ENCODE measurements at regions of chr11 and their contacts with region 1.

Region 1: GRCh38 chr11:108654994-108655631 is 9.8 kb upstream of the DDX10 start:
- DNase-seq: no peak
- ATAC-seq: peak; percentile 49 to 61

Region 2: DNA sequence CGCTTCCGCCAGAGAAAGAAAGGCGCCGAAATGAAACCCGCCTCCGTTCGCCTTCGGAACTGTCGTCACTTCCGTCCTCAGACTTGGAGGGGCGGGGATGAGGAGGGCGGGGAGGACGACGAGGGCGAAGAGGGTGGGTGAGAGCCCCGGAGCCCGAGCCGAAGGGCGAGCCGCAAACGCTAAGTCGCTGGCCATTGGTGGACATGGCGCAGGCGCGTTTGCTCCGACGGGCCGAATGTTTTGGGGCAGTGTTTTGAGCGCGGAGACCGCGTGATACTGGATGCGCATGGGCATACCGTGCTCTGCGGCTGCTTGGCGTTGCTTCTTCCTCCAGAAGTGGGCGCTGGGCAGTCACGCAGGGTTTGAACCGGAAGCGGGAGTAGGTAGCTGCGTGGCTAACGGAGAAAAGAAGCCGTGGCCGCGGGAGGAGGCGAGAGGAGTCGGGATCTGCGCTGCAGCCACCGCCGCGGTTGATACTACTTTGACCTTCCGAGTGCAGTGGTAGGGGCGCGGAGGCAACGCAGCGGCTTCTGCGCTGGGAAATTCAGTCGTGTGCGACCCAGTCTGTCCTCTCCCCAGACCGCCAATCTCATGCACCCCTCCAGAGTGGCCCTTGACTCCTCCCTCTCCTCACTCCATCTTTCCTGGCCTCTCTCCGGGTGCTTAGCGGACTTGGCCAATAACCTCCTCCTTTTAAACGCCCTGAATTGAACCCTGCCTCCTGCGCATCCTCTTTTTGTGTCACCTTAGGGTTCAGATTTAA is 432.2 kb before region 1 on chr11 and contains the start of gene ATM:
- intact Hi-C with region 1: loop called in 1 of 2 experiments (anchors 10 kb)
- DNase-seq: peak; percentile 100
- ATAC-seq: peak; percentile 97 to 98
- total RNA-seq, gene ATM: 40.8 to 43.0 TPM

Region 3: DNA sequence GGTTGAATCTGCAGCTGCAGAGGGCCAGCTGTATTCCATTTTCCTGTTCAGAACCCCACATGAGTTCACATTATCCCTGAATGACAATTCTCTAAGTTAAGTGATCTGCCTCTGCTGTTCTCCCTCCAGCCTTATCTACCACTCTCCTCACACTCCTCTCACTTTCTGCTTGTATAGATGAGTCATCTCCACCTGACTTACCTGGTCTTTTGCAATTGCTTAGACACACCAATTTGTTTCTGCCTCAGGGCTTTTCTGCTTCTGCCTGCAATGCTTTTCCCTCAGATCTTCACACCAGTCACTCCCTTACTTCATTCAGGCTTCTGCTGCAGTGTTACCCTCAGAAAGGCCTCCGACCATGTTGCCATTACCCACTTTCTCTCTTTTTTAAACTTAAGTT is 314.1 kb before region 1 on chr11:
- intact Hi-C with region 1: loop called in 1 of 2 experiments (anchors 10 kb)
- DNase-seq: no peak
- ATAC-seq: peak in 1 of 2 donors; percentile 84

Region 4: DNA sequence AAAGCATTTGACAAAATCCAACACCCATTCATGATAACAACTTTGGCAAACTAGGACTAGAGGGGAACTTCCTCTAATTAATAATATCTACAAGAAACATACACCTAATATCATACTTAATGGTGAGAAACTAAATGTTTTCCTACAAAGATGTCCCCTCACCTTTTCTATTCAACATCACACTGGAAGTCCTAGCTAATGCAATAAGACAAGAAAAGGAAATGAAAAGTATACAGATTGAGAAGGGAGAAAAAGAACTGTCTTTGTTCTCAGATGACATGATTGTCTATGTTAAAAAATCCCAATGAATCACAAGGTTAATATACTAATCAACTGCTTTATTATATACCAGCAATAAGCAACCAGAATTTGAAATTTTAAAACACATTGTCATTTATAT is 240.2 kb before region 1 on chr11:
- intact Hi-C with region 1: loop called in 1 of 2 experiments (anchors 5 kb)
- DNase-seq: no peak
- ATAC-seq: no peak

Region 5: GRCh38 chr11:108497317-108498045 is 157.6 kb before region 1 on chr11:
- intact Hi-C with region 1: loop called in 1 of 2 experiments (anchors 10 kb)
- DNase-seq: peak; percentile 92
- ATAC-seq: peak; percentile 95 to 98

Region 6: GRCh38 chr11:108559340-108559739 is 95.8 kb before region 1 on chr11:
- intact Hi-C with region 1: no loop called
- DNase-seq: no peak
- ATAC-seq: peak in 1 of 2 donors; percentile 33